A549 (cell line): ENCODE measurements at regions of chr22 and their contacts with region 1.

Region 1: GRCh38 chr22:25777870-25778269 is 35.9 kb downstream of the MYO18B start:
- DNase-seq: peak; percentile 47 to 69
- ATAC-seq: peak; percentile 87 to 89
- H3K4me3 ChIP-seq: no peak overlapping the region
- H3K27ac ChIP-seq: no peak overlapping the region
- H3K4me1 ChIP-seq: no peaks in the 10 kb centered on the region
- CTCF ChIP-seq: peak; percentile 43
- EP300 ChIP-seq: no peak
- POLR2A ChIP-seq: no peak
- RAD21 ChIP-seq: peak; percentile 46 to 47; a peak in 4 of 5 replicates

Region 2: DNA sequence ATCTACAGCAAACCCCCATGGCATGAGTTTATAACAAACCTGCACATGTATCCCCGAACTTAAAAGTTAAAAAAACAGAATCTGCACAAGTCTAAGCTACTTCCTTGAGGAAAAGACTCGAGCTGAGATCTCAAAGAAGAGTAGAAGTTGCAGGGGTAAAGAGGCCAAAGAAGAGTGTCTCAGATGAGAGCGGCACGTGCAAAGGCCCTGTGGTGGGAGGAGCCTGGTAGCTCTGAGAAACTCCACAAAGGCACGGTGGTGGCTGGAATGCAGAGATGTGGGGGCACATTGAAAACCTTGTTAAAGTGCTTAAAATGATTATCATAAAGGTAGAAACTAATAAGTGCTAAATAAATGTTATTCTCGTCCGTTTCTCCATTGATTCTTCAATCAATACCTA is 316.6 kb before region 1 on chr22:
- CTCF ChIA-PET with region 1: interaction called, 41 read pairs
- POLR2A ChIA-PET with region 1: no interaction called
- DNase-seq: no peak
- ATAC-seq: no peak
- H3K4me3 ChIP-seq: no peak overlapping the region
- H3K27ac ChIP-seq: no peak overlapping the region
- H3K4me1 ChIP-seq: no peaks in the 10 kb centered on the region
- CTCF ChIP-seq: no peak
- EP300 ChIP-seq: no peak
- POLR2A ChIP-seq: no peak
- RAD21 ChIP-seq: no peak

Region 3: GRCh38 chr22:25690796-25691195 is 87.1 kb before region 1 on chr22:
- CTCF ChIA-PET with region 1: no interaction called
- POLR2A ChIA-PET with region 1: no interaction called
- DNase-seq: no peak
- ATAC-seq: no peak
- H3K4me3 ChIP-seq: no peak overlapping the region
- H3K27ac ChIP-seq: no peak overlapping the region
- H3K4me1 ChIP-seq: no peaks in the 10 kb centered on the region
- CTCF ChIP-seq: no peak
- EP300 ChIP-seq: no peak
- POLR2A ChIP-seq: no peak
- RAD21 ChIP-seq: no peak

Region 4: DNA sequence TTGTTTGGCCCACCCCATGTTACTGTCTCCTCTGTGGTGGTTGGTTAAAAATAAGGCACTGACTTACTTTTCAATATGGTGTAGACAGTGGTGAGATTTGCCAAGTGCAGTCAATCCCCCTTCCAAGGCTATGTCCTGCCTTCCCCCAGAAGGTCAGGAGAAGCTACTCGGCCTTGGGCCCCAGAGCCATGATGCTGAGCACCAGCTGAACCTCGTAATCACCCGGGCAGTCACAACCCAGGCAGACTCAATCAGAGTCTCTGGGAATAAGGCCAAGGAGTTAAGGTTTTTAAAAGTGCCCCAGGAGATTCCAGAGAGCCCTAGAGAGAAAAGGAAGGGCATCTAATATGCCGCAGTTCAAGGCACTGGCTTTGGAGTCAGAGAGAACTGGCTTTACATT is 12.1 kb before region 1 on chr22:
- CTCF ChIA-PET with region 1: interaction called, 18 read pairs
- POLR2A ChIA-PET with region 1: no interaction called
- DNase-seq: no peak
- ATAC-seq: no peak
- H3K4me3 ChIP-seq: no peak overlapping the region
- H3K27ac ChIP-seq: no peak overlapping the region
- H3K4me1 ChIP-seq: no peaks in the 10 kb centered on the region
- CTCF ChIP-seq: no peak
- EP300 ChIP-seq: no peak
- POLR2A ChIP-seq: no peak
- RAD21 ChIP-seq: no peak

Region 5: DNA sequence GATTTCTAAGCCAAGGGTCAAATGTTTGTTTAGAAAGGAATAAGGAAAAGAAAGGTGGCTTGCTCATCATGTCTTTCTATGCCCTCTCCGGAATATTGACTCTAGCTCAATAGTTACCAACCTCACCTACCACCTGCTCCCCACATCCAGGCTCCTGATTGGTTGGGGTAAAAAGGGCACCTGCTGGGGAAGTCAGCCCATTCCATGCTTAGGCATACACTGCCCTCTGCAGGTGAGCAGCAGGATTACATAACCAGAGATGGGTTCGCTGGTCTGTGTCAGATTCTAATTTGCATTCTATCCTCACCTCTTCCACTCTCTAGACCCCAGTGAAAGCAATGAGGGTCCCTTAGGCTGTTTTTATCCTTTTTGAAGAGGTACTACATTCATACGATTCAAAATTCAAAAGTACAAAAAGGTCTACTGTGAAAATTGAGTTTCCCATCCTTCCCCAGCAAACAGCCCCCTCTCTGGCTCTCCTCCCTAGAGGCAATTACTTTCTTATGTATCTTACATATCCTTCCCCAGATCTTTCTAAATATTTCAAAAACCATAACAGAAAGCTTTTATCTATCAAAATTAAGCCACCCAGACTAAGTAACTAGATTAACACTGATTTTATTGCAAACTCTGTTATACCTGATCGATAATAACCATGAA is 553.2 kb after region 1 on chr22:
- CTCF ChIA-PET with region 1: interaction called, 17 read pairs
- POLR2A ChIA-PET with region 1: no interaction called
- DNase-seq: peak; percentile 44 to 45
- ATAC-seq: peak; percentile 69 to 87; a peak in 5 of 6 replicates
- H3K4me3 ChIP-seq: no peak overlapping the region
- H3K27ac ChIP-seq: no peak overlapping the region
- H3K4me1 ChIP-seq: no peaks in the 10 kb centered on the region
- CTCF ChIP-seq: peak; percentile 65
- EP300 ChIP-seq: no peak
- POLR2A ChIP-seq: no peak
- RAD21 ChIP-seq: peak; percentile 78 to 88